HAP-1 (cell line): ENCODE measurements at regions of chr21 and their contacts with region 1.

Region 1: DNA sequence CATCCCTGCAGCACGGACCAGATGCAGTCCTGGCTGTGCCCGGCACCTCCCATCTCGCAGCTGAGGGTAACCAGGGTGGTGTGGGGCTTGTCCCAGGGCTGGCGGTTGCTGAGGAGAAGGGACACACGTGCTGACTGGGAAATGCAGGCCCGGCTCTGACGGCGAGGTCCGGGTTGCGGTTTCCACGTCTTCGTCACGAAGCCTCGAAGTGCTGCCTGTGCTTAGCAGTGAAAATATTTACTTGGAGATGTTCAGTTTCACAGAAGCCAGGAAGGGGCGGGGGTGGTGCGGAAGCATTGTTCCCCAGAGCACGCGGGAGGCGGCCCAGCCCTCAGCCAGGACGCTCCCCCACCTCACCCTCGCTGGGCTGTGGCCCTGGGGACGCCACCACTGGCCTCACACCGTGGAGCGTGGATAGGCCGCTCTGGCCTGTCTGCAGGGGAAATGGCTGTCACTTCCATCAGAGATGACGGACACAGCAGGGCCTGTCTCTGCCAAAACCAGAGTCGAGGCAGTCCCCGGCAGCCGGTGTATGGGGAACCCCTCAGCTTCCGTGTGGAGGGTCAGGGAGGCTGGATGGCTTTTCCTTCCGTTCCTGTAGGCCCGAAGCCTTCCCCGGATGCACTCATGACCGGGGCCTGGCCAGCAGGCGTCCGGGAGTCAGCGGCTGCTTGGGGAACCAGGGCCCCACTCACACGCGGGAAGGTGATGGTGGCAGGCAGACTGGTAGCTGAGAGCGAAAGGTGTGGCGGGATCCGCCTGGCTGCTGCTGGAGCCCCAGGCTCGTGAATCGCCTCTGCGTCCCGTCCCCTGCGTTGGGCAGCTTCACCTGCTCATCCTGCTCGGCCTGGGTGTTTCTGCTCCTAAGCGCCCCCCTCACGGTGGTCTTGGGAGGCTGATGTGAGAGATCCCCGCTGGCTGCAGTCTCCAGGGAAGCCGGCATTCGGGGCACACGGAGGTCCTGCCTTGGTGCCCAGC is 14.7 kb upstream of the POFUT2 start:
- DNase-seq: no peak
- H3K4me3 ChIP-seq: no peak overlapping the region
- H3K4me1 ChIP-seq: no peaks in the 10 kb centered on the region
- H3K27me3 ChIP-seq: no peaks in the 10 kb centered on the region

Region 2: GRCh38 chr21:45236481-45236880 is 65.9 kb before region 1 on chr21:
- in situ Hi-C with region 1: no loop called
- DNase-seq: no peak
- H3K4me3 ChIP-seq: no peak overlapping the region
- H3K4me1 ChIP-seq: peaks cover 10% of the 10 kb centered on the region
- H3K27me3 ChIP-seq: peaks cover 8% of the 10 kb centered on the region

Region 3: DNA sequence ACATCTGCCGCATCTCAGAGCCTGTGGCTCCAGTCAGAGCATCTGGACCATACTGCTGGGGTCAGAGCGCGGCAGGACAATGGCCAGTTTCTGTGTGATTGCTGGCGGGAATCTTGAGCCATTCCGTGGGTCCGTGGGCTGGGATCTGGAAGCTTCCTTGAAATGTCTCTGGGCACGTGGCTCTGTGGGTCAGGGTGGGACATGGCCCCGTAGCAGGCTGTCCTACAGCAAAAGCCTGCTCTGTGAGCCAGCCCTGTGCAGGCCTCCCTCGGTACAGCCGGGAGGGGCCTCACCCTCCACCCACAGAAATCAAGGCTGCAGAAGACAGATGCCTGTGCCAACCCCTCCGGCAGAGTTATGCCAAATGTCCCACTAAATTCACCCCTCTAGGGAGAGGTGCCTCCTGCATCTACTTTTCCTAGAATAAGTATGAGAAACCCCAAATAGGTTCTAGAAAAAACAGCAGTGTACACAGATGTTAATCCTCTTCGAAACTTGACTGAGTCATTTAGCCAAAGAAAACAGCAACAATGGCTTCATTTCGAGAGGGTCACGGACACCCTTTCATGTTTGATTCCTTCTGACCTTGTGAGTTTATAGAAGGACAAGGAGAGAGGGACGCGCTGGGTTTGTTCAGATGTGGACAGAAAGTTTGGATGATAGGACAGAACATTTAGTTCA is 130.3 kb after region 1 on chr21:
- in situ Hi-C with region 1: loop called (anchors 5 kb)
- DNase-seq: peak in 1 of 2 experiments; percentile 20
- H3K4me3 ChIP-seq: no peak overlapping the region
- H3K4me1 ChIP-seq: peaks cover 7% of the 10 kb centered on the region
- H3K27me3 ChIP-seq: no peaks in the 10 kb centered on the region